ENCODE measurements at regions of chr14 and their contacts with region 1.

Region 1: DNA sequence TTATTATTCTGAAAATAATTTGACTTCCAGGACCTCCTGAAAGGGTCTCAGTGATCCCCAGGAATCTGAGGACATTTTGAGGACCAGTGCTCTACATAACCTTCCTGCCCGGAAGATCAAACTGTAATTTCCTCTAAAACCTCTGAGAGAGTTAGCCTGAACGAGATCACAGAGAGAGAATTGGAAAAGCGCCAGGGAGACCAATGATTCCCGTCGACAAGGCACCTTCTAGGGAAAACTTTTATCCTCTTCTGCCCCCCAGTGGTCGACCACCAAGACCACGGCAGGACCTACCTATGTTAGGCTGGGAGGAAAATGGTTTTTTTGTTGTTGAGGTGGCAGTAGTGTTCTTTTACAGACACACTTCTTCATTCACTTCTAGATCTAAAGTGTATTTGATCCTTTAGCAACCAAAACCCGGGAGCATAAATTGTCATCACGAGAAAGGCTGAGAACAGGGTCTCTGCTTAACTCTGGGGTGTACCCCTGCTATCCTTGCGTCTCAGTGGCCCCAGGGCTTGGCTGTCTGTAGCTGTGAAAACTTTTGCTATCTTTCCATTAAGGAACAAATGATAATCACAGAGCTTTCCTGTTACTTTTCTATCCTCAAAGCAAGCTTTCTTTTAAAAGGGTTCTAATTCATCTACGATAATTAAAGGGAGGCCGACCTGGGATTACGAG is 62.9 kb upstream of the NID2 start:
- DNase-seq: no peak
- H3K4me3 ChIP-seq: no peak overlapping the region
- H3K27me3 ChIP-seq: peaks cover 3% of the 10 kb centered on the region; the same call in 1 of the 2 replicates
- CTCF ChIP-seq: peak; percentile 75

Region 2: DNA sequence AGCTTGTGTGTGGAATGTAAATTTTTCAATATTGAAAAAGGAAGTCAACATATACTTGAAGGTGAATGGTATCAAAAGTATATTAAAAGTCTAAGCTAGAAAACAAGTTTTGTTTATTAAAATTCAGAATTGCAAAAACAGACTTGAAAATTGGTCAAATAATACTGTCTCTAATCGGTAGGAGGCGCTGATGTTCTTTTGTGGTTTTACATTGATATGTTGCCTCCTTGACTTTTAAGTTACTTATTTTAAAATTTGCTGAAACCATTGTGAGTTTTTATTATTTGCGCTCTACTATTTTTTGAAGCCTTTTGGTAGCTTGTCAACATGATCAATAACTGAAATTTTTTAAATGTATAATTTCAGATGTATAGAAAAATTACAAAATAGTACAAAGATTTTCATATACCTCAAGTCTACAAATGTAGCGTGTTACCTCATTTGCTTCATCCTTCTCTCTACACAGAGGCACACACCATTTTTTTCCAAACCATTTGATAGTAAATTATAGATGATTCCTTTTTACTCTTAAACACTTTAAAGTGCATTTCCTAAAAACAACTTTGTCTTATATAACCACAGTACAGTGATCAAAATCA is 135.5 kb before region 1 on chr14:
- CTCF ChIA-PET with region 1: interaction called, 57 read pairs
- POLR2A ChIA-PET with region 1: no interaction called
- DNase-seq: no peak
- H3K4me3 ChIP-seq: no peak overlapping the region
- H3K27me3 ChIP-seq: no peaks in the 10 kb centered on the region
- CTCF ChIP-seq: peak; percentile 66

Region 3: GRCh38 chr14:52142504-52142903 is 10.7 kb after region 1 on chr14:
- CTCF ChIA-PET with region 1: interaction called, 13 read pairs
- POLR2A ChIA-PET with region 1: no interaction called
- DNase-seq: no peak
- H3K4me3 ChIP-seq: no peak overlapping the region
- H3K27me3 ChIP-seq: peaks cover 6% of the 10 kb centered on the region
- CTCF ChIP-seq: no peak

Region 4: DNA sequence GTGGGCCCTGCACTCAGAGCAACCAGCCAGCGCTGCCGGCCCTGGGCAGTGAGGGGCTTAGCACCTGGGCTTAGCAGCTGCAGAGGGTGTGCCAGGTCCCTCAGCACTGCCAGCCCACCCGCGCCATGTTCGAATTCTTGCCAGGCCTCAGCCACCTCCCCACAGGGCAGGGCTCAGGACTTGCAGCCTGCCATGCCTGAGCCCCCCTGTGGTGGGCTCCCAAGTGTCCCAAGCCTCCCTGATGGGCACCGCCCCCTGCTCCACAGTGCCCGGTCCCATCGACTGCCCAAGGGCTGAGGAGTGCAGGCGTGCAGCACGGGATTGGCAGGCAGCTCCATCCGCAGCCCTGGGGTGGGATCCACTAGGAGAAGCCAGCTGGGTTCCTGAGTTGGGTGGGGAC is 35.0 kb after region 1 on chr14:
- CTCF ChIA-PET with region 1: no interaction called
- POLR2A ChIA-PET with region 1: no interaction called
- DNase-seq: no peak
- H3K4me3 ChIP-seq: no peak overlapping the region
- H3K27me3 ChIP-seq: no peaks in the 10 kb centered on the region
- CTCF ChIP-seq: no peak